BJ (cell line): ENCODE measurements at regions of chr19 and their contacts with region 1.

Region 1: GRCh38 chr19:36060430-36060829 is 5.7 kb downstream of the WDR62 start:
- DNase-seq: no peak
- H3K4me3 ChIP-seq: no peak overlapping the region
- H3K27me3 ChIP-seq: no peaks in the 10 kb centered on the region
- CTCF ChIP-seq: peak; percentile 82

Region 2: GRCh38 chr19:35557539-35558399 is 502.7 kb before region 1 on chr19:
- CTCF ChIA-PET with region 1: no interaction called
- POLR2A ChIA-PET with region 1: no interaction called
- DNase-seq: no peak
- H3K4me3 ChIP-seq: peak overlapping the region; percentile 34
- H3K27me3 ChIP-seq: peaks cover 16% of the 10 kb centered on the region
- CTCF ChIP-seq: no peak

Region 3: DNA sequence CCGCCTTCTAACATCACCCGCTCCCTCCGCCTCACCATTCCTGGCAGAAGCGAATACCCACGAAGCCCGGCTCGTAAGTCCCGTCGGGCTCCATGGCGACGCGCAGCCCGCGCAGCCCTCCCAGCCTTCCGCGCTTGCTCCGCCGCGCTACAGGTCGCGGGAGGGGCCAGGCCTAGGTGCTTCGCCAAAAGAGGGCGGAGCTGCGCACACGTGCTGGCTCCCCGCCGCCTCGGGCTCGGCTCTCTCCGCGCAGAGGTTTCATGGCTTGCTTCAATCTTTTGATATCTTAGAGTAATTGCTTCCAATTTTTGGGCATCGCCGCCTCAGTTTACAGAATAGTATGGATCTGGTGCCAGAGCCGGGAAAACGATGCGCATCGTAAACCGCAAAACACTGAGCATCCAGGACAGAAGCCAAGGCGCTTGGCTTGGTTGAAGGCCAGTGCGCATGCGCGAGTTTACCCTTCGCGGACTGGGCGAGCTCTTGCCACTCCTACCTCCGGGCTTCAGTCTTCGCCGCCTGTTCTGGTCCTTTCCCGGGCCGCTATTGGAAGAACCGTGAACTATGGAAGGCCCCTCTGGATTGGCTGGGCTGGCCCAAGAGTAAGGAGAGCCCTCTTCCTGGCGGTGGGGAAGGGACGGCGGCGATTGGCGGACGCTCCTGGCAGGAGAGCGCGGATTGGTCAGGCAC is 54.5 kb after region 1 on chr19 and contains the start of gene POLR2I:
- CTCF ChIA-PET with region 1: interaction called, 15 read pairs
- POLR2A ChIA-PET with region 1: no interaction called
- DNase-seq: peak; percentile 99
- H3K4me3 ChIP-seq: peak within 1 kb of the TSS; percentile 98
- H3K27me3 ChIP-seq: no peaks in the 10 kb centered on the region
- CTCF ChIP-seq: no peak
- polyA plus RNA-seq, gene POLR2I: 67.1 and 94.0 TPM in 2 replicates

Region 4: GRCh38 chr19:36169084-36169760 is 108.8 kb after region 1 on chr19:
- CTCF ChIA-PET with region 1: interaction called, 39 read pairs
- POLR2A ChIA-PET with region 1: no interaction called
- DNase-seq: no peak
- H3K4me3 ChIP-seq: no peak overlapping the region
- H3K27me3 ChIP-seq: no peaks in the 10 kb centered on the region
- CTCF ChIP-seq: no peak